Activated CD4-positive, alpha-beta T cell treated with anti-CD3 and anti-CD28 coated beads, Interleukin-2, amount 10 ng/mL, durations not matched to agents 7 days and 5 days (primary cell): ENCODE measurements at regions of chr6 and their contacts with region 1.

Region 1: GRCh38 chr6:29016559-29017427 is 11.7 kb upstream of the ZNF311 start:
- DNase-seq: peak; percentile 89
- H3K4me3 Mint-ChIP-seq: peak overlapping the region; percentile 84
- H3K27ac Mint-ChIP-seq: peak overlapping the region; percentile 89
- H3K4me1 Mint-ChIP-seq: peaks cover 22% of the 10 kb centered on the region
- H3K27me3 Mint-ChIP-seq: peaks cover 40% of the 10 kb centered on the region

Region 2: DNA sequence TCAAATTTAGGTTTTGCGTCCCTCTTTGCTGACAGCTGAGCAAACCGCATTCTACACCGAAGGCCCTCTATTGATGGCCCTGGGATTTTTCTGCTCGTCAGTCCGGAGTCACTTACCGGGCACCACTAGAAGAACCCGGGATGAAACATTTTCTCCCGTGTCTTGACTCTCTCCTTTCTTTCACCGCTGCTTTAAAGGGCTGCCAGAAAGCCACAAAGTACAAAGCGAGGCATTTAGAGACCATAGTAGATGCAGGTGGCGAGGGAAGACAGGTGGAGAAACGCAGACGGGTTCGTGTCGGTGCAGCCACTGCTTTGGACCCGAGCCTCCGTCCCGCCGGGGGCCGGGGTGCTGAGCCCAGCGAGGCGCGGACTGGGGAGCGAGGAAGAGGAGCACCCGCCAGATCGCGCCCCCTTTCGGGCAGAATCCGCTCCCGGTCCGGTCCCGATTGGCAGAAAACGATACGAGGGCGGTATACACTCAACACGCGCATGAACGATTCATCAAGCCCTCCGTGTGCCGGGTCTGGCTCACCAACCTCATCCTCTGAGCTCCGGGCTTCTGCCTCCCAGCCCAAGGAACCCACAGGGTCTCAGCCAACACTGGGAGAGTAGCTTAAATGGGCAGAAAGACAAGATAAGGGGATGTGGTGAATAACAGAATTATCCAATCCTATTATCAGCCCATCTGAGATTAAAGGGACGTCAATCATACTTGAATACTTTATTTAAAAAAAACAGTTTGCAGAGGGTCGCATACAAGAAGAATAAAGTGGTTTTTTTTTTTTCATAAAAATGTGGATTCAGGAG is 178.0 kb before region 1 on chr6:
- CTCF ChIA-PET with region 1: interaction called, 72 read pairs
- POLR2A ChIA-PET with region 1: interaction called, 4 read pairs
- DNase-seq: peak; percentile 80
- H3K4me3 Mint-ChIP-seq: peak overlapping the region; percentile 92
- H3K27ac Mint-ChIP-seq: peak overlapping the region; percentile 81
- H3K4me1 Mint-ChIP-seq: peaks cover 27% of the 10 kb centered on the region
- H3K27me3 Mint-ChIP-seq: peaks cover 47% of the 10 kb centered on the region

Region 3: DNA sequence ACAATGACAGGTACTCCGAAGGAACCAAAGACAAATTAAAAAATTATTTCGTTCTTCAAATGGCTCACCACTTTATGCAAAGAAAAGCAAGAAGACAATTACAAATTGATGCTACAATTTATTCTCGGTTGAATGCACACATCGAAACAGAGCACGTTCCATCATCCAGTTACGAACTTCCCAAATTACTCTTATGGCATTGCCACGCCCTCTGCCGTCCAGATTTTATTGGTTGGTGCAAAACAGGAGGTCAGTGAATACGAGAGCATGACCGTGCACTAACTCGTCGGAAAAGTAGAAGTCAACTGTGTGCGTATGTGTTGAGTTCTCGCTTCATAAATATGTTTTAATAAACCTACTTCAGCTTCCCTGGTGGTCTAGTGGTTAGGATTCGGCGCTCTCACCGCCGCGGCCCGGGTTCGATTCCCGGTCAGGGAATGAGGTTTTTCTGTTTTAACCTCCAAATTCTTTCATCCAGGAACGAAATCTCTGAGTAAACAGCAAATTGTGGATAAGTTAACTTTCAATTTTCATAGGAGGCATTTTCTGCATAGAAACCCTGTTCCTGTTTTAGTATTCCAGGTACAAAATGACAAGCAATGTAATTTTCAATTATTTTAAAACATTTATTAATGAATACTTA is 34.8 kb before region 1 on chr6:
- CTCF ChIA-PET with region 1: interaction called, 17 read pairs
- POLR2A ChIA-PET with region 1: interaction called, 4 read pairs
- DNase-seq: peak; percentile 60
- H3K4me3 Mint-ChIP-seq: peak overlapping the region; percentile 85
- H3K27ac Mint-ChIP-seq: peak overlapping the region; percentile 90
- H3K4me1 Mint-ChIP-seq: peaks cover 68% of the 10 kb centered on the region
- H3K27me3 Mint-ChIP-seq: peaks cover 53% of the 10 kb centered on the region

Region 4: DNA sequence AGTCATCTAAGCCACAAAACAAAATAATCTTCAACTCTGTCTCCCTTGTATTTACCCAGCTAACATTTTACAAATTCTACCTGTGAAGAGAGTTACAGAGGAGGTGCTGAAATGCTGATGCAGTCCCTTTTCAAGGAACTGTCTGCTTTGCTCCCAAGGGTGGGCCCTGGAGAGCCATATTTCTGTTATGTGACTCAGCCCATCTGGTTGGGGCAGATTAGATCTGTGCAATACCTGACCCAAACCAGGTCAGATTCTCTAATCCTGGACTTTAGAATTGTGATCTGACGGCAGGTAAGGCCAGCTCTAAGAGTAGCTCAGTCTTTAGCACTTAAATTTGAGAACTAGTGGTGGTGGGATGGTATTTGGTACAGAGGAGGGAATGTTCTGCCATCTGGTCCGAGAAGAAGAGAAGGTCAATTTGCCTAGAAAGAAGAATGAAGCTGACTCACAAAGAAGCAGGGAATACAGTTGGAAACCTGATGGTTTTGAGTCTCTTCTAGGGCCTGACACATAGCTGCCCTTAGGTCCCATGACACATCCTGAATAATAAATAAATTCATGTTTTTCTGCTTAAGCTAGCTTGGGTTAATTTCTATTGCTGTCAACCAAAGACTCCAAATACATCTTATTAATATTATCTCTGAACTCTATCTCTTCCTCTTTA is 19.8 kb before region 1 on chr6:
- CTCF ChIA-PET with region 1: interaction called, 20 read pairs
- POLR2A ChIA-PET with region 1: no interaction called
- DNase-seq: no peak
- H3K4me3 Mint-ChIP-seq: no peak overlapping the region
- H3K27ac Mint-ChIP-seq: no peak overlapping the region
- H3K4me1 Mint-ChIP-seq: peaks cover 3% of the 10 kb centered on the region
- H3K27me3 Mint-ChIP-seq: peaks cover 19% of the 10 kb centered on the region

Region 5: GRCh38 chr6:29005183-29005885 is 11.5 kb before region 1 on chr6 and contains the start of gene ZNF311:
- CTCF ChIA-PET with region 1: interaction called, 19 read pairs
- POLR2A ChIA-PET with region 1: interaction called, 3 read pairs
- DNase-seq: peak; percentile 62
- H3K4me3 Mint-ChIP-seq: peak within 1 kb of the TSS; percentile 76
- H3K27ac Mint-ChIP-seq: peak within 1 kb of the TSS; percentile 90
- H3K4me1 Mint-ChIP-seq: peaks cover 28% of the 10 kb centered on the region
- H3K27me3 Mint-ChIP-seq: peaks cover 9% of the 10 kb centered on the region
- total RNA-seq, gene ZNF311: 0.55 to 0.65 TPM